Right ventricle myocardium superior (tissue), 1 donor: ENCODE measurements at regions of chr1 and their contacts with region 1.

Region 1: GRCh38 chr1:8238851-8239305 is 79.0 kb upstream of the SLC45A1 start:
- DNase-seq: peak; percentile 55
- ATAC-seq: peak; percentile 84

Region 2: DNA sequence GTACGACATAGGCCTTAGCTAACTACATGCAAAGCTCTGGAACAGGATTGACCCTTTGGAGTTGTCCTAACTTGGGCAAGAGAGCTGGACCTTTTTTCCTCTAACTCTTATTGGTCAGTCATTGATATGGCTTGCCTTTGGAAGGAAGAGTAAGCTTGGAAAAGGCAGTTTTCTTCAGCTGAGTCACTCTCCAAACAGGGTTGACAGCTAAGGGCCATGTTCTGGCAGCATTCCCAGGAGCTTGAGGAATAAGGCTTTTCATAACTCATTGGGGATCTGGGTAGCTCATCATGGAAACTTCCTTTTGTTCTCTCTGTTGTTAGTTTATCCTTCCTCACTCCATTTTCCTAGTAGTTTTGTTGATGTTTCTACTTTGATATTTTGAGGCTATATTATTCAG is 198.3 kb before region 1 on chr1:
- intact Hi-C with region 1: loop called (anchors 10 kb)
- DNase-seq: peak; percentile 71
- ATAC-seq: peak; percentile 75